Dendritic cell treated with granulocyte-macrophage colony-stimulating factor and Interleukin-4, amounts not matched to agents 40 ng/mL and 50 ng/mL, for 4 days (primary cell): ENCODE measurements at regions of chr7 and their contacts with region 1.

Region 1: DNA sequence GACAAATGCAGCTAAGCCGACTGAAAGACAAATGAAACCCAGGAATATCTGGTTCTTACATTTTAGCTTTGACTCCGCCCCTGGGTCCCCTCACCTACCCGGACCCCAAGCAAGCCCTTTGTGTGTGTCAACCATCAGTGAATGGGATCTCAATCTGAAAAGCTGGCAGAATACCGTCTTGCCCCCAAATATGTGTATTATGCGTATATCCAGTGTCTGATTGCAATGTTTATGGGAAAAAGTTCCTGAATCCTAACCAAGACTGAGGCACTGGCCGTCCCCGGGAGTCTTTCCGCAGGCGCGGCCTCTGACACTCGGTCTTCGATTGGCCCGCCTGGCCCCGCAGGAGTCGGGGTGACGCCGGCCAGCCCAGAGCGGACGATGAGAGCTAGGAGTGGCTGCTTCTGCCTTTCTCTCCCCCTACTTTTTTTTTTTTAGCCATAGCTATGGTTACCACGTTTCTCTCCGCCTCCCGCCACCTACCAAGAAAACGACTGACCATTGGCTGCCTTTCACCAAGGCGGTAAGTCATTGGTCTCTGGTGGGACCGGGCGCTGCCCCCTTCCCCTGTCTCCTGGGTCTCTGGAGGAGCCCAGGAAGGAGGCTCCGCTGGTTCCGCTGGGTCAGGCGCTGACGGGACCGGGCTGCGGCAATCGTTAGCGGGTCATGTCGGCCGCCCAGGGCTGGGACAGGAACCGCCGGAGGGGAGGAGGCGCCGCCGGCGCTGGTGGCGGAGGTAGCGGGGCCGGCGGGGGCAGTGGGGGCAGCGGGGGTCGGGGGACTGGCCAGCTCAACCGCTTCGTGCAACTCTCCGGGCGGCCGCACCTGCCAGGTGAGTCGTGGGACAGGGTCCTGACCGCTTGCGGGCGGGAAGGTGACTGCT is at the start of gene KLHDC10:
- H3K4me3 Mint-ChIP-seq: peak within 1 kb of the TSS; percentile 97
- H3K27ac Mint-ChIP-seq: peak within 1 kb of the TSS; percentile 82
- H3K4me1 Mint-ChIP-seq: peaks cover 48% of the 10 kb centered on the region
- H3K27me3 Mint-ChIP-seq: no peaks in the 10 kb centered on the region

Region 2: DNA sequence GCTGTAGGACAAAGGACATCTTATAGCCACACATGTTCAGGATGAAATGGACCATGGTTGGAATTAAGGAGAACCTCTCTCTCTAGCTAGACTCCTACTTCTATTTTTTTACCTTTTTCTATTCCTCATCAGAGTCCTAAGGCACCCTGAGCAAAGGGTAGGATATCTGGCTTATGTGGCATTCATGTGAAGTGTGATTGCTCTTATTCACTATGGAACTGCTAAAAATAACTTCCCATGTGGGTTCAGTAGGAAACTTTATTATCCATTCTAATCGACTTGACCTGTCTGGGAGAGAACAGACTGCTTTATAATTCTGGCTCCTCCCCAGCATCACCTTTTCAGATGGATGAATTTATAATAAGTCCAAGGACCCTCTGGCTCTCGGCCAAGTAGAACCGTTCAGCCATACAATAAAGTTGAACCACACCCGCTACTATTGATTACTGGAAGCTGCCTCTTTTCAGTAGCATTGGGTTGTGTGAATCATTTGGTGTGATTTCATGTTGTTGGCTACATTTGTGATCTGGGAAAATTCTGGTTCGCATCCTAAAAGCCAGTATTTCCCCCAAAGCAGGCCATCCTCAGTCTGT is 341.2 kb before region 1 on chr7:
- intact Hi-C with region 1: no loop called
- H3K4me3 Mint-ChIP-seq: no peak overlapping the region
- H3K27ac Mint-ChIP-seq: no peak overlapping the region
- H3K4me1 Mint-ChIP-seq: no peaks in the 10 kb centered on the region
- H3K27me3 Mint-ChIP-seq: no peaks in the 10 kb centered on the region

Region 3: DNA sequence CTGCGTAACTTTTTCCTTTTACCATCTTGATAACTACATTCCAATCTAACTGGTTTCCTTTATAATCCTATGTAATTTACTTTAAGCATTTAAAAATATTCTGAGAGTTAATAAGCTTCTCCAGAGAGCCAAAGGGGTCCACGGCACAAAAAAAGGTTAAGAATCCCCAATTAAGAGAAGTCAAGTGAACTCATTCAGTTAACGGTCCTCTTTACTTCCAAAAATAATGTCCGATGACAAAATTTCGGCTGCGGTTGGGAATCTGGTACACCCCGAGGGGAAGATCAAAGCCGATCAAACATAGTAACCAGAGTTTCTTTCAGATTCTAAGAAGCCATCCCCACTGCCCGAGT is 19.5 kb before region 1 on chr7:
- intact Hi-C with region 1: loop called (anchors 1 kb)
- H3K4me3 Mint-ChIP-seq: peak overlapping the region; percentile 99
- H3K27ac Mint-ChIP-seq: peak overlapping the region; percentile 93
- H3K4me1 Mint-ChIP-seq: peaks cover 7% of the 10 kb centered on the region
- H3K27me3 Mint-ChIP-seq: peaks cover 15% of the 10 kb centered on the region

Region 4: DNA sequence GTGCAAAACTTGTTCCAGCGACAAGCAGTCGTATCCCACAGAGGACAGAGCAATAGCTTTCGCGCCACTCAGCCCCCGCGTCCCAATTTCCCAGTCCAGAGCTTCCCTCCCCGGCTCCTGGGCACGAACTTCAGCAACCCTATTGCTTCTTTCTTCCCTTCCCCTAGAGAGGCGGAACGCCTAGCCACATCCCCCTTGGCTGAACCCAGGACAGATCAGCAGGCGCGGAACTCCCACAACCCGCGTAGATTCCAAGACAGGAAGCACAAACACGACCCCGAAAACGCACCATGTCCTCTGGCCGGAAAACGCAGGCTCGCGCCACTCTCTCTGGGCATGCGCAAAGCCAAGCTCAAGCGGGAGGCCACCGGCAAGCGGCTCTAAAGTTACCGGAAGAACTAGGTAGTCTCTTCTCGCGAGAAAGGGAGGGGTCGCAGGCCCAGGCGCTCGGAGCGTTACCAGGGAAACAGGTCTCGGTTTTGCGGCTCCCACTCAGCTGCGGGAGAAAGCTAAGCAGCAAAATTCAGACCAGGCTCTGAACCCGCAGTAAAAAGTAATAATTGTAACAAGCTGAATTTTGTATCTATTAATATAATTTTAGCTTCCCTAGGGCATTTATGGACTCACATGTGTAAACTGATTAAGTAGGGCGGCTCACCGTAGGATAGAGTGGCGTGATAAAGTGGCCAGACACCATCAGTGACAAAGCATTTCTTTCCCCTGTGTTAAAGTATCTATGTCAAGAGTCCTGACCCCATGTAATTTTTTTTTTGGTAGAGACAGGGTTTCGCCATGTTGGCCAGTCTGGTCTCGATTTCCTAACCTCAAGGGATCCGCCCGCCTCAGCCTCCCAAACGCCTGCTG is 135.1 kb after region 1 on chr7 and contains the start of gene TMEM209:
- intact Hi-C with region 1: loop called (anchors 2 kb)
- H3K4me3 Mint-ChIP-seq: peak within 1 kb of the TSS; percentile 96
- H3K27ac Mint-ChIP-seq: peak within 1 kb of the TSS; percentile 93
- H3K4me1 Mint-ChIP-seq: peaks cover 5% of the 10 kb centered on the region
- H3K27me3 Mint-ChIP-seq: no peaks in the 10 kb centered on the region

Region 5: GRCh38 chr7:130695840-130696239 is 625.6 kb after region 1 on chr7:
- intact Hi-C with region 1: loop called (anchors 10 kb)
- H3K4me3 Mint-ChIP-seq: no peak overlapping the region
- H3K27ac Mint-ChIP-seq: no peak overlapping the region
- H3K4me1 Mint-ChIP-seq: no peaks in the 10 kb centered on the region
- H3K27me3 Mint-ChIP-seq: no peaks in the 10 kb centered on the region

Region 6: GRCh38 chr7:130758429-130759056 is 688.3 kb after region 1 on chr7:
- intact Hi-C with region 1: loop called (anchors 5 kb)
- H3K4me3 Mint-ChIP-seq: no peak overlapping the region
- H3K27ac Mint-ChIP-seq: no peak overlapping the region
- H3K4me1 Mint-ChIP-seq: no peaks in the 10 kb centered on the region
- H3K27me3 Mint-ChIP-seq: peaks cover 15% of the 10 kb centered on the region